ENCODE measurements at regions of chr11 and their contacts with region 1.

Region 1: GRCh38 chr11:63838678-63839507 is at the start of gene MARK2:
- DNase-seq: peak; percentile 97 to 100
- H3K4me3 ChIP-seq: peak within 1 kb of the TSS; percentile 83 to 97 (median 90)
- H3K27ac ChIP-seq: peak within 1 kb of the TSS; percentile 43
- H3K4me1 ChIP-seq: peaks cover 15 to 38% (median 25%) of the 10 kb centered on the region in 4 experiments
- H3K27me3 ChIP-seq: no peaks in the 10 kb centered on the region
- CTCF ChIP-seq: no peak
- EP300 ChIP-seq: no peak
- POLR2A ChIP-seq: peak in 1 of 2 experiments; percentile 48; a peak in 1 of 3 replicates
- RAD21 ChIP-seq: 0 out of 4 replicates have a peak, but pooled peaks of 1 of the 2 experiments have one; percentile 3
- total RNA-seq, gene MARK2: 56.5 and 58.5 TPM in 2 replicates

Region 2: DNA sequence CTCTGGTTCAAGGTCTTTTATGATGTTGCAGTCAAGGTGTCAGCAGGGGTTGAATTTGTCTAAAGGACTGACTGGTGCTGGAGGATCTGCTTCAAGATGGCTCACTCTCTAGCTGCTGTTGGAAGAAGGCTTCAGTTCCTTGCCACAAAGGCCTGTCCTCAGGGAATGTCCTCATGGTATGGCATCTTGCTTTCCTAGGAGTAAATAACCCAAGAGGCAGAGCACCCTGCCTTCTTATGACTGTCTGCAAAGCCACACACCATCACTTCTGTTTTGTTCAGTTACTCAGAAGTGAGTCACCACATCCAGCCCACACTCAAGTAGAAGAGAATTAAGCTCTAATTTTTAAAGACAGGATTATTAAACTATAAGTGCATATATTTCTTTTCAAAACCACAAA is 393.2 kb before region 1 on chr11:
- CTCF ChIA-PET with region 1: no interaction called
- POLR2A ChIA-PET with region 1: no interaction called
- DNase-seq: no peak
- H3K4me3 ChIP-seq: no peak overlapping the region
- H3K27ac ChIP-seq: no peak overlapping the region
- H3K4me1 ChIP-seq: peaks cover 2 to 13% (median 2%) of the 10 kb centered on the region in 4 experiments; a peak in 5 of 7 replicates
- H3K27me3 ChIP-seq: no peaks in the 10 kb centered on the region
- CTCF ChIP-seq: no peak
- EP300 ChIP-seq: no peak
- POLR2A ChIP-seq: no peak
- RAD21 ChIP-seq: no peak

Region 3: DNA sequence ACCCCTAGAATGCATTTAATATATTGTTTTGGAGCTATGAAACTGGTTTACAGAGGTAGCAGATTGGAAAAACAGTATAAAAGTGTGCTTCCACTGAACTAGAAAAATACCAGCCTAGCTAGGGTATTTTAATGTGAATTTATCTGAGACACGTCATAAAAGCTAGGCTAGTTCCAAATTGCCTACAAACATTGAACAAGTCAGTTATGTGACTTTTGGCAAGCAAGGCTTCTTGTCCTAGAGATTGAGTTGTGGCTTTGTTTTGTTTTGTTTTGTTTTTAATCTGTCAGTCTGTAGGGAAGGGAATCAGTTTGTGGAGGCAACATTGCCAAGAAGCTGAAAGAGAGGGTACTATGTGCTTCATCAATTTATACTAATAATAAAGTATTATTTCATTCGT is 133.4 kb before region 1 on chr11:
- CTCF ChIA-PET with region 1: no interaction called
- POLR2A ChIA-PET with region 1: no interaction called
- DNase-seq: no peak
- H3K4me3 ChIP-seq: no peak overlapping the region
- H3K27ac ChIP-seq: no peak overlapping the region
- H3K4me1 ChIP-seq: no peaks in the 10 kb centered on the region
- H3K27me3 ChIP-seq: no peaks in the 10 kb centered on the region
- CTCF ChIP-seq: no peak
- EP300 ChIP-seq: no peak
- POLR2A ChIP-seq: no peak
- RAD21 ChIP-seq: no peak

Region 4: GRCh38 chr11:63821411-63821810 is 17.5 kb before region 1 on chr11:
- CTCF ChIA-PET with region 1: interaction called, 17 read pairs
- POLR2A ChIA-PET with region 1: interaction called, 9 read pairs
- DNase-seq: no peak
- H3K4me3 ChIP-seq: no peak overlapping the region
- H3K27ac ChIP-seq: no peak overlapping the region
- H3K4me1 ChIP-seq: no peaks in the 10 kb centered on the region
- H3K27me3 ChIP-seq: no peaks in the 10 kb centered on the region
- CTCF ChIP-seq: no peak
- EP300 ChIP-seq: no peak
- POLR2A ChIP-seq: peak in 1 of 2 experiments; percentile 10; a peak in 1 of 3 replicates
- RAD21 ChIP-seq: no peak

Region 5: GRCh38 chr11:63871962-63872799 is 33.3 kb after region 1 on chr11:
- CTCF ChIA-PET with region 1: interaction called, 76 read pairs
- POLR2A ChIA-PET with region 1: interaction called, 12 read pairs
- DNase-seq: no peak
- H3K4me3 ChIP-seq: no peak overlapping the region
- H3K27ac ChIP-seq: no peak overlapping the region
- H3K4me1 ChIP-seq: peaks cover 4 to 25% (median 8%) of the 10 kb centered on the region in 4 experiments
- H3K27me3 ChIP-seq: no peaks in the 10 kb centered on the region
- CTCF ChIP-seq: peak; percentile 14 to 45 (median 34)
- EP300 ChIP-seq: no peak
- POLR2A ChIP-seq: no peak
- RAD21 ChIP-seq: peak; percentile 51 to 61

Region 6: GRCh38 chr11:63888170-63889086 is 49.5 kb after region 1 on chr11:
- CTCF ChIA-PET with region 1: interaction called, 45 read pairs
- POLR2A ChIA-PET with region 1: interaction called, 6 read pairs
- DNase-seq: peak in 1 of 2 experiments; percentile 60
- H3K4me3 ChIP-seq: peak overlapping the region in 2 of 4 experiments; percentile 10 to 39; a peak in 3 of 8 replicates
- H3K27ac ChIP-seq: peak overlapping the region; percentile 73; the same call in 1 of the 2 replicates
- H3K4me1 ChIP-seq: peaks cover 9 to 26% (median 12%) of the 10 kb centered on the region in 4 experiments
- H3K27me3 ChIP-seq: no peaks in the 10 kb centered on the region
- CTCF ChIP-seq: no peak
- EP300 ChIP-seq: no peak
- POLR2A ChIP-seq: no peak
- RAD21 ChIP-seq: 0 out of 4 replicates have a peak, but pooled peaks of 1 of the 2 experiments have one; percentile 9

Region 7: GRCh38 chr11:63933459-63933858 is 94.6 kb after region 1 on chr11:
- CTCF ChIA-PET with region 1: interaction called, 20 read pairs
- POLR2A ChIA-PET with region 1: no interaction called
- DNase-seq: no peak
- H3K4me3 ChIP-seq: no peak overlapping the region
- H3K27ac ChIP-seq: no peak overlapping the region
- H3K4me1 ChIP-seq: peaks cover 0 to 4% (median 0%) of the 10 kb centered on the region in 4 experiments; a peak in 1 of 7 replicates
- H3K27me3 ChIP-seq: peaks cover 0 to 3% (median 2%) of the 10 kb centered on the region in 4 experiments; a peak in 3 of 7 replicates
- CTCF ChIP-seq: no peak
- EP300 ChIP-seq: no peak
- POLR2A ChIP-seq: no peak
- RAD21 ChIP-seq: no peak

Measured in H1 (cell line).